ENCODE measurements at regions of chr20 and their contacts with region 1.

Region 1: DNA sequence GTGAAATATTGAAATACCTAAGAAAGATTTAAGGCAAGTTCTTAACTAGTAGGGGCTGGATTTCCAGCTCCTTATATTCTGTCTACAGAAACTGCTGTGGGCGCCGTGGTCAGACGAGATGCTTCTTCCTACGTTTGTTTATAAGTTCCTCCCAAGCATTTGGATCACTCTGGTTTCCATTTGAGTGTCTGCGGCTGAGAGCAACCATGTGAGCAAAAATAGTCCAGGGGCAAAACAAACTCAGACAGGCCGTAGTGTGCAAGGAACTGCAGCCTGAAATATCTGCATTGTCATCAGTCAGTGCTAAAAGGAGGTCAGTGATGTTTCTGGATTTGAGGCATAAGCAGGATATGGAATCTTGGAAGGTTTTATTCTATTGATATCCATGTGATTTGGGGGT is 485.9 kb upstream of the JAG1 start:
- DNase-seq: peak; percentile 72
- H3K4me3 ChIP-seq: no peak overlapping the region
- H3K27ac ChIP-seq: no peak overlapping the region
- H3K4me1 ChIP-seq: peaks cover 38% of the 10 kb centered on the region
- H3K27me3 ChIP-seq: no peaks in the 10 kb centered on the region
- CTCF ChIP-seq: no peak
- POLR2A ChIP-seq: no peak

Region 2: DNA sequence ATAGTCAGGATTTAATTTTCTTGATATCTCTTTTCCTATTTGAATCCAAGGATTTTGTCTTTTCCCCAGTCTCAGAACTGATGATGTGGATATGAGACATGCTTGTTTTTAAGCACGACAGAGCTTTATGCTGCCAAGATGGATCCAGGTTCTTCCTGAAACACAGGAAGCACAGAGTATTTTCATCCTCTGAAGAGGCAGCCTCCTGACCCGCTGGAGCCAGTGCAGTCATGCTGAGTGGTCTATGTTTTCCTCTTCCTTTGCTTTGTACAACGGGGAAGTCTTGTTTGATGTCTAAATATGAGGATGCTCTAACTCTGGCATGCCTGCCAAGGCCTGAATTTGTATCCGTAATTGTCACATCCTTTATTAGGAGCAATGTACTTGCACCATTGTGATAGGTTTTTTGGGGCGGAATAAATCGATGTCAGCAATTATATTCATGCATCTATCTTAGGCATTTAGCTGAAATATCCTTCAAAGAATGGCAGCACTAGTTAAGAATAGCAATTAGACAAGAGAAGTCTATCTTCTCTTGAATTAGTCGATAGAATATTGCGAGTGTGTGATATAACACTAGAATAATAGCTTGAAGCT is 78.8 kb before region 1 on chr20:
- CTCF ChIA-PET with region 1: no interaction called
- POLR2A ChIA-PET with region 1: no interaction called
- dilution Hi-C with region 1: no loop called
- intact Hi-C with region 1: loop called (anchors 5 kb)
- DNase-seq: peak; percentile 93
- H3K4me3 ChIP-seq: no peak overlapping the region
- H3K27ac ChIP-seq: peak overlapping the region; percentile 65
- H3K4me1 ChIP-seq: peaks cover 16% of the 10 kb centered on the region
- H3K27me3 ChIP-seq: no peaks in the 10 kb centered on the region
- CTCF ChIP-seq: no peak
- POLR2A ChIP-seq: no peak